ENCODE measurements at regions of chr2 and their contacts with region 1.

Region 1: DNA sequence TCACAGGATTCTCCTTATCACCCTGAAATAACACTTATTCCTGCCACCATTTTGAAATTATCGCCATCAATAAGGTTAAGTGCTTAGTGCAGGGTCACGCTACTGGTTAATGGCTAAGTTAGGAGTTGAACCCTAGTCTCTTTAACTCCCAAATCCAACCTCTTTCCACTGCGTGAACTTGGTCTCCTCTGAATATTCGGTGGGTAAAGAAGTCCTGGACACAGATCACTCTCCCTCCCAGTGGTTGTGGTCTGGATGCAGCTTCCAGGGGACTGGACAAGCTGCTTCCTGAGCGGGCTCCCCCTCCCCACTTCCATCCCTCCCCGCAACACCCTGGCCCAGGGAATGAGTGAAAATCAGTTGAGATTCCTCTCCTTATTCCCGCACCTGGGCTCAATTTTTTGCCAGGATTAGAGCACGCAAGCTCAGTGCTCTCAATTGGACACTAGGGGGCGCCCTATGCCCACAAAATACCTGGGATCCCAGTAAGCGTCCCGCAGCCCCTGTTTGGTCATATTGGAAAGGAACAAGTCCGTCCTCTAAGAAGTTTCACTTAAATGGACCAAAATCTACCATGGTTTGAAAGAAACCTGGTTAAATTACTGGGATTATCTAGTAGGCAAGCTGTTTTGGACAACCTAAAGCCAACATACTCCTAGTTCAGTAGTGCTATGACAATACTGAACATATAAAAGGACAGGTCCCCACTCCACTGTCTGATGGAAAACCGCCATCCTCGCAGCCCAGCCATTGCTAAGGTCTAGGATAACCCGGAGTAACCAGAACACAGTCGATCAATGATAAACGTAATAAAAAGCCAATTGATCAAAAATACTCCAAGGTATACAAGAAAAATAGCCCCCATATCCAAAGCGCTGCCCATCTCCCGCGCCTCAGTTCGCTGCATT is 40.4 kb downstream of the DHRS9 start:
- DNase-seq: peak; percentile 67 to 80 (median 77)
- H3K4me3 ChIP-seq: no peak overlapping the region
- H3K4me3 Mint-ChIP-seq: peak overlapping the region in 1 of 2 donors; percentile 51
- H3K27ac ChIP-seq: no peak overlapping the region
- H3K27ac Mint-ChIP-seq: no peak overlapping the region
- H3K4me1 ChIP-seq: peaks cover 45 to 62% of the 10 kb centered on the region in 2 donors
- H3K4me1 Mint-ChIP-seq: peaks cover 64% of the 10 kb centered on the region
- H3K27me3 ChIP-seq: no peaks in the 10 kb centered on the region
- H3K27me3 Mint-ChIP-seq: peaks cover 0 to 6% (median 2%) of the 10 kb centered on the region in 3 donors
- CTCF ChIP-seq: peak; percentile 98

Region 2: DNA sequence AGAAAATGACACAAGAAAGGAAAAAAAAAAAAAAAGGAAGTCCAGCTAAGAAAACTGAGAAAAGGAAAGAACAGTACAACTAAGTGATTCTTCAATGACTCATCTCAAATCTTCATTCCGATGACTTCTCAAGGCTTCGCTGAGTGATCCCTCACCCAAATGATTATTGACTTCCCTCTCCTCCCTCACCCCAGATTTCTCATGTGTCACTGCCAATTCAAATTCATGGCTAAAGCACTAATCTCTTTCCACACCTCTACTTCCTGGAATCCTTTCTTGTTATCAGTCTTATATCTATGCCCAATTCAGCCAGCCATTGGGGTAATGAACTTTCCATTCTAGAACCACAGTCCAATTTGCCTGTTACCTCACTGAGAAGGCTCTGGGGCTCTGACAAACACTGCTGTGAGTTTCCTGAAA is 71.4 kb before region 1 on chr2:
- intact Hi-C with region 1: loop called in 1 of 2 experiments (anchors 10 kb)
- DNase-seq: peak; percentile 85 to 98 (median 93)
- H3K4me3 ChIP-seq: peak overlapping the region in 1 of 3 experiments; percentile 37
- H3K4me3 Mint-ChIP-seq: peak overlapping the region; percentile 5 to 58
- H3K27ac ChIP-seq: peak overlapping the region; percentile 27 to 85
- H3K27ac Mint-ChIP-seq: peak overlapping the region; percentile 80 to 96 (median 90)
- H3K4me1 ChIP-seq: peaks cover 39 to 47% of the 10 kb centered on the region in 2 donors
- H3K4me1 Mint-ChIP-seq: peaks cover 45% of the 10 kb centered on the region
- H3K27me3 ChIP-seq: no peaks in the 10 kb centered on the region
- H3K27me3 Mint-ChIP-seq: peaks cover 0 to 1% (median 0%) of the 10 kb centered on the region in 3 donors
- CTCF ChIP-seq: no peak

Region 3: DNA sequence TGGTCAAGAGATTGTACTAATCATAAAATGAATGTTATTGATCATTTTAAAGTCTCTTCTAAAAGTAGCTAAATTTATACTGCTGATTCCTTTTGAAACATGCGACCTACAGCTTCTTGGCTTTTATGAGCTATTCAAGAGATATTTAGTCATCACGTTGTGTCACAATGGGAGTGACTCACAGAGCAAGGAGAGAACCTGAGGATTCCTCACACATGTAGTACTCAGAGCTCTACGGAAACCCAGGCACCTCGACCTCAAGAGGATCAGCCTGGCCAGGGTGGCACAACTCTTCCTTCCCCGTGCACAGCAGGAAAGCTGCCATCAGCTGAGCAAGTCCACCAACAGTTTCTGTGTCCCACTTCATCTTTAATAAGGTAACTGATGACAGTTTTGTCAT is 40.4 kb before region 1 on chr2 and contains the start of gene DHRS9:
- intact Hi-C with region 1: loop called in 1 of 2 experiments (anchors 5 kb)
- DNase-seq: peak; percentile 93 to 98 (median 98)
- H3K4me3 ChIP-seq: peak within 1 kb of the TSS; percentile 24 to 70 (median 57)
- H3K4me3 Mint-ChIP-seq: peak within 1 kb of the TSS; percentile 73 to 86
- H3K27ac ChIP-seq: peak within 1 kb of the TSS; percentile 64 to 90
- H3K27ac Mint-ChIP-seq: peak within 1 kb of the TSS; percentile 83 to 95 (median 91)
- H3K4me1 ChIP-seq: peaks cover 82 to 89% of the 10 kb centered on the region in 2 donors
- H3K4me1 Mint-ChIP-seq: peaks cover 86% of the 10 kb centered on the region
- H3K27me3 ChIP-seq: no peaks in the 10 kb centered on the region
- H3K27me3 Mint-ChIP-seq: peaks cover 0 to 3% (median 0%) of the 10 kb centered on the region in 3 donors
- CTCF ChIP-seq: no peak
- polyA plus RNA-seq, gene DHRS9: 10.0 to 12.9 (median 10.0) TPM

Region 4: GRCh38 chr2:169091761-169092523 is 17.8 kb before region 1 on chr2:
- intact Hi-C with region 1: no loop called
- DNase-seq: peak in 2 of 3 donors; percentile 52 to 64
- H3K4me3 ChIP-seq: no peak overlapping the region
- H3K4me3 Mint-ChIP-seq: no peak overlapping the region
- H3K27ac ChIP-seq: peak overlapping the region in 1 of 2 donors; percentile 3
- H3K27ac Mint-ChIP-seq: peak overlapping the region in 3 of 7 donors; percentile 4 to 71 (median 63)
- H3K4me1 ChIP-seq: peaks cover 82 to 94% of the 10 kb centered on the region in 2 donors
- H3K4me1 Mint-ChIP-seq: peaks cover 96% of the 10 kb centered on the region
- H3K27me3 ChIP-seq: no peaks in the 10 kb centered on the region
- H3K27me3 Mint-ChIP-seq: no peaks in the 10 kb centered on the region
- CTCF ChIP-seq: no peak

Region 5: GRCh38 chr2:169141713-169142352 is 32.1 kb after region 1 on chr2:
- intact Hi-C with region 1: loop called (anchors 2 to 5 kb)
- DNase-seq: peak; percentile 39 to 74 (median 64)
- H3K4me3 ChIP-seq: no peak overlapping the region
- H3K4me3 Mint-ChIP-seq: no peak overlapping the region
- H3K27ac ChIP-seq: no peak overlapping the region
- H3K27ac Mint-ChIP-seq: no peak overlapping the region
- H3K4me1 ChIP-seq: no peaks in the 10 kb centered on the region
- H3K4me1 Mint-ChIP-seq: peaks cover 5% of the 10 kb centered on the region
- H3K27me3 ChIP-seq: no peaks in the 10 kb centered on the region
- H3K27me3 Mint-ChIP-seq: peaks cover 0 to 1% (median 0%) of the 10 kb centered on the region in 3 donors
- CTCF ChIP-seq: peak; percentile 89

Region 6: DNA sequence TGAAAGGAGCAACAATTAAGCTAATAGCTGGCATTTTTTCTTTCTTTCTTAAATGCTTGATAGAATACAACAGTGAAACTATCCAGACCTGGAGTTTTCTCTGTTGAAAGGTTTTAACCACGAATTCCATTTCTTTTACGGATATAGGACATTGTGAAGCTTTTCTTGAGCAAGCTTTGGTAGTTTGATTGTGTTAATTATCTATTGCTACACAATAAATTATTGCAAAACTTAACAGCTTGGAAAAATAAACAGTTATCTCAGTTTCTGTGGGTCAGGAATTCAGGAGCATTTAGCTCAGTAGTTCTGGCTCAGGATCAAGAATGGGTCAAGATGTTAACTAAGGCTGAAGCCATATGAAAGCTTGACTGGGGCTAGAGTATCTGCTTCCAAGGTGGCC is 596.2 kb after region 1 on chr2:
- intact Hi-C with region 1: no loop called
- DNase-seq: no peak
- H3K4me3 ChIP-seq: no peak overlapping the region
- H3K4me3 Mint-ChIP-seq: no peak overlapping the region
- H3K27ac ChIP-seq: no peak overlapping the region
- H3K27ac Mint-ChIP-seq: no peak overlapping the region
- H3K4me1 ChIP-seq: no peaks in the 10 kb centered on the region
- H3K4me1 Mint-ChIP-seq: no peaks in the 10 kb centered on the region
- H3K27me3 ChIP-seq: no peaks in the 10 kb centered on the region
- H3K27me3 Mint-ChIP-seq: peaks cover 0 to 1% (median 0%) of the 10 kb centered on the region in 3 donors
- CTCF ChIP-seq: no peak

Measured in CD14-positive monocyte (primary cell).